ENCODE measurements at regions of chr6 and their contacts with region 1.

Region 1: DNA sequence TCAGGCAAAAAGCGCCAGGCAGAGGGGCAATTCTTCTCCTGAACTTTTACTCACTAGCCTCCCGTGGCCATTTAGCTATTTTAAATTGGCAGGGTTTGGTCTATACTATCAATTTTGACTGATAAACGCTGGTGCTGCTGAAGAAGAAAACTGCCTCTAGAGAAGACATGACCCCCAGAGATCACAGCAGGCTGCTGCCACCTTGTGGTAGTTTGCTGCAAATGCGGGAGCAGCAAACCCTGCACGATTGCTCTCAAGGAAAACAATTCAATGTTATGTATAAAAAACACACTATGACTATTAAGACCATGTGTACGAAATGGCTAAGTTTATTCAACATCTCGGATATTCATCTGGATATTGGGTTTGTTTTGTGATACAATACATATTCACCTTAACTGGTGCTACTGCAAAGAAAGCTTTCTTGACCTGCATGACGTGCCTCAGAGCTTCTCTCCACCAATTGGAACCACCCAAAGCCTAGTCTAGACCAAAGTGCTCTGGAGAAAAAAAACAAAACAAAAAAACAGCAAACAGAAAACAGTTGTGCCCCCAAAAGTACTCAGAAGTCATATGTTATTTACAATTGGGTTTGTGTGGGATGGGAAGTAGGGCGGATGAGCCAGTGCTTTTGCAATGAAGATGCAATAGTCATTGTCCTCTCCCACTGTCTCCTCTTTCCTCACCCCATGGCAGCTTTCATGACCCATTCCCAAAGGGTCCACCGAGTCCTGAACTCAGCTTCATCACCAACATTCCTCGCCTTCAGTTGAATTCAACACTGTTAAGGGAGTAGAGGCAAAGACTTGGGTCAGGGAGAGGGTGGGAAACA is 19.6 kb upstream of the IL17F start:
- DNase-seq: peak; percentile 78
- ATAC-seq: peak; percentile 83
- H3K4me3 Mint-ChIP-seq: no peak overlapping the region
- H3K27ac Mint-ChIP-seq: peak overlapping the region; percentile 31
- H3K4me1 Mint-ChIP-seq: peaks cover 12% of the 10 kb centered on the region
- H3K27me3 Mint-ChIP-seq: no peaks in the 10 kb centered on the region
- CTCF ChIP-seq: peak; percentile 90

Region 2: GRCh38 chr6:52098634-52099185 is 165.2 kb before region 1 on chr6:
- CTCF ChIA-PET with region 1: interaction called, 11 read pairs
- POLR2A ChIA-PET with region 1: no interaction called
- intact Hi-C with region 1: no loop called
- DNase-seq: no peak
- ATAC-seq: peak; percentile 34
- H3K4me3 Mint-ChIP-seq: no peak overlapping the region
- H3K27ac Mint-ChIP-seq: no peak overlapping the region
- H3K4me1 Mint-ChIP-seq: no peaks in the 10 kb centered on the region
- H3K27me3 Mint-ChIP-seq: peaks cover 29% of the 10 kb centered on the region
- CTCF ChIP-seq: peak; percentile 20

Region 3: GRCh38 chr6:52162940-52163908 is 100.7 kb before region 1 on chr6:
- CTCF ChIA-PET with region 1: interaction called, 121 read pairs
- POLR2A ChIA-PET with region 1: interaction called, 9 read pairs
- intact Hi-C with region 1: loop called (anchors 2 kb)
- DNase-seq: no peak
- ATAC-seq: peak; percentile 48
- H3K4me3 Mint-ChIP-seq: no peak overlapping the region
- H3K27ac Mint-ChIP-seq: peak overlapping the region; percentile 90
- H3K4me1 Mint-ChIP-seq: peaks cover 34% of the 10 kb centered on the region
- H3K27me3 Mint-ChIP-seq: peaks cover 21% of the 10 kb centered on the region
- CTCF ChIP-seq: peak; percentile 75

Region 4: DNA sequence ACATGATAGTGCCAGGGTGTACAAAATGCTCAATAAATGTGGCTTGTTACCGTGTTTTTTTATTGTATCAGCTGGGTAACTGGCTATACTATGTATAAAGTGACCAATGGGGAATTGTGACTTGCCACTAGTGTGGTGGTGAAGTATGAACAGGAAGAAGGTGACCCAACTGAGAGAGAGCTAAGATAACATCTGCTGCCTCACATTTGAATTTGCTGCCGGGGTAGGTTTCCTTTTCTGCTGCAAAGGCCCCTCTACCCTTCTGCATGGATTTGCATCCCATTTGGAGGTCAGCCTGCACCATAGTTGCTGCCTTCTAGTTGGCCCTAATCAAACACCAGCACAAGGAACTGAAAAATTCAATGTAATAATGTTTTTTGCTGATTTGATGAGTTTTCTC is 53.7 kb before region 1 on chr6:
- CTCF ChIA-PET with region 1: interaction called, 45 read pairs
- POLR2A ChIA-PET with region 1: interaction called, 7 read pairs
- intact Hi-C with region 1: no loop called
- DNase-seq: no peak
- ATAC-seq: no peak
- H3K4me3 Mint-ChIP-seq: no peak overlapping the region
- H3K27ac Mint-ChIP-seq: no peak overlapping the region
- H3K4me1 Mint-ChIP-seq: peaks cover 5% of the 10 kb centered on the region
- H3K27me3 Mint-ChIP-seq: peaks cover 24% of the 10 kb centered on the region
- CTCF ChIP-seq: no peak

Region 5: DNA sequence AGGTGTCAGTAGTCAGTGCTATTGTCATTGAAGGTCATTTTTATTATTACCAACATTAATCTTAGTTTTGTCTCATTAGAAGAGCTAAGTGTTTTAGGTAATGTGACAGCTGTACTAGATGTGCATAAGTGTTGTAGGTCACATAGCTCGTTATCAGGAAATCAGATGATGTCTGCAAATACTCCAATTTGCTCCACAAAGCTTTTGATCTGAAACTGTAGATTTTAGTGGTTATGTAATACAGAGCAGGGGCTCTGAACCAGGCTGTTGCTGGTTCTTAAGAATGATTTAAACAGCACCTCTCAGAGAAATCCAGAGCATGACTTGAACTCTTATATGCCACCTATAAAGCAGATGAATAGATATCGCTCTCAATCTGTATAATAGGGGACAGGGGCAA is 22.1 kb before region 1 on chr6:
- CTCF ChIA-PET with region 1: interaction called, 46 read pairs
- POLR2A ChIA-PET with region 1: interaction called, 3 read pairs
- intact Hi-C with region 1: no loop called
- DNase-seq: no peak
- ATAC-seq: no peak
- H3K4me3 Mint-ChIP-seq: no peak overlapping the region
- H3K27ac Mint-ChIP-seq: no peak overlapping the region
- H3K4me1 Mint-ChIP-seq: no peaks in the 10 kb centered on the region
- H3K27me3 Mint-ChIP-seq: peaks cover 11% of the 10 kb centered on the region
- CTCF ChIP-seq: no peak